ENCODE measurements at regions of chr7 and their contacts with region 1.

Region 1: DNA sequence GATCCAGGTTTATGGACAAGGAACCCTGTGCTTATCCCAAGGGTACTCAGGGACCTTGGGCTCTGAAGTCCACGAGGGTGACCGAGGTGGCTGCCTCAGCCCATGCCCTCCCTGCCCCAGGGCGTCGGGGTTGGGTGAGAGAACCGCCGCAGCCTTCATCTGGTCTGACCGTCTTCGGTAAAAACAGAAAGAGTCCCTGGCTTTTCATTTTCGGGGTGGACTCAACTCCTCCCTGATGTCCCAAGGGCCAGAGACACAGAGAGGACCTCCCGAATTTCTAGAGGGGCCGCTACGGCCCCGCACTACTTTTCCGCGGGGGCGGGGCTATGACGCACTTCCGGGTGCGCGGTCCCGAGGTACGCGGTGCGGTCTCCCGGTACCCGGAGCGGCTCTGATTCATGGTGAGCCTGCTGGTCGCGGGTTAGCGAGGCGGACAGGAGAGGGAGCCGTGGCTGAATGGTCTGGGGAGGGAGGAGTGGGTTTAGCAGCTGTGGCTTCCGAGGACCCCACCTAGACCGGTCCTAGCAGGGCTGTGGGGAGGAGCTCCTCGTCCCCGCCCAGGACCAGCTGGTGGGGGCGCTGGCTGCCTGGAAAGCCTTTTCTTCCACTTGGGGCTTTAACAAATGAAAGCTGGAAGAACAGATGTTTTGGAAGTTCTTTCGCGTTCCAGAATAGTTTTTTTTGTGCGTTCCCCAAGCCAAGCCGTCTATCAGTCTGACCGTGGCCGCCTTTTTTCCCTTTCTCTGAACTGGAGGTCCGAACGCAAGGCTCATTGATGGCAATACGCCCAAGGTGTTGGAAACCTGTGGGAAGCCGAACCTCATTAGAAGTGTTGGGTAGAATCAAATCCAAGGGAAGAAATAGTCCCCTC is at the start of gene ZSCAN21:
- DNase-seq: peak; percentile 79
- H3K4me3 Mint-ChIP-seq: peak within 1 kb of the TSS; percentile 74
- H3K27ac Mint-ChIP-seq: peak within 1 kb of the TSS; percentile 63
- H3K4me1 Mint-ChIP-seq: peaks cover 7% of the 10 kb centered on the region
- H3K27me3 Mint-ChIP-seq: no peaks in the 10 kb centered on the region
- CTCF ChIP-seq: no peak
- total RNA-seq, gene ZSCAN21: 5.5 and 5.7 TPM in 2 replicates

Region 2: DNA sequence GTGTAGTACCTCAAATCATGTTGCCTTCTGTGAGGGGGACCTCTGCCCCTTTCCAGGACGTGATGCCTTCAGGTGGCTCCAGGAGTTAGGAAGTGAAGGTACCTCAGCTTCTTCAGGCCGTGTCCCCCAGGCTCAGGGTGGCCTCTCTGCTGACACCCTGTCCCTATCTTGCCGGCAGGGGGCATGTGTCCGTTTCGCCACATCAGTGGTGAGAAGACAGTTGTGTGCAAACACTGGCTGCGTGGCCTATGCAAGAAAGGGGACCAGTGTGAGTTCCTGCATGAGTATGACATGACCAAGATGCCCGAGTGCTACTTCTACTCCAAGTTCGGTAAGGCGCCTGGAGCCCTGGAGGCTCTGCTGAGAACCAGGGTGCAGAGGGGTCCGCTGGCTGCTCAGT is 601.7 kb before region 1 on chr7:
- CTCF ChIA-PET with region 1: no interaction called
- intact Hi-C with region 1: no loop called
- DNase-seq: peak; percentile 13
- H3K4me3 Mint-ChIP-seq: no peak overlapping the region
- H3K27ac Mint-ChIP-seq: no peak overlapping the region
- H3K4me1 Mint-ChIP-seq: no peaks in the 10 kb centered on the region
- H3K27me3 Mint-ChIP-seq: no peaks in the 10 kb centered on the region
- CTCF ChIP-seq: no peak

Region 3: DNA sequence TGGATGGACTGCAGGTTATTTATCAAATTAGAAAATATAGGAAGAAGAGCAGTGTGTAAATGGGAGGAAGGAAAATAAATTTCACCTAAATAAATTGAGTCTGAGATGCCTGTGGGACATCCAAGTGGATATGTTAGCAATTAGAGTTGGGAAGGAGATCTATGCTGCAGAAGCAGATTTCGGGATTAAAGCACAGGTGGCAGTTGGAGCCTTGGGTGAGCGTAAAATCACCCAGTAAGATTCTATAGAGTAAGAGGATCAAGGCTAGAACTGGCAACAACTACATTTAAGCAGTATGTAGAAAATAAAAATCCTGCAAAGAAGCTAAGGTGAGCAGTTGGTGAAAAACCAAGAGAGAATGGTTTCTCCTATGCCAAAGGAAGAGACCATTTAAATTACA is 138.7 kb before region 1 on chr7:
- CTCF ChIA-PET with region 1: no interaction called
- intact Hi-C with region 1: loop called (anchors 5 kb)
- DNase-seq: no peak
- H3K4me3 Mint-ChIP-seq: no peak overlapping the region
- H3K27ac Mint-ChIP-seq: no peak overlapping the region
- H3K4me1 Mint-ChIP-seq: peaks cover 3% of the 10 kb centered on the region
- H3K27me3 Mint-ChIP-seq: no peaks in the 10 kb centered on the region
- CTCF ChIP-seq: no peak

Region 4: DNA sequence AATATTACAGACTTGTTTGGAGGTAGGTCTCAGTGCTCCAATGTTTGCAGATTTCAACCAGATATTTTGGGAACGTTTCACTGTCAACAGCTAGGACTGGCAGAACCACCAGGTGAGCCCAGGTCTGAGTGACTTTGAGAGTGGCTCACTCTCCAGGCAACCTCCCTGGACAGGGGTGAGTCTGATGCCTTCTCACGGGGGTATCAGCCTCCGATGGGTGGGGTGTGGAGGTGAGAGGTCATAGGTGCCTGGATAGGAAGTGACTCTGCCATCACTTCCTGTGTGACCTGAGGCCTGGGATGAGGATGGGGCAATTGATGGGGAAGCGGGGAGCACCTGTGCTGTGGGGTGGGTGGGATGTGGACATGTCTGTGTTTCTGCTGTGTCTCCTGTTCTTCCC is 78.4 kb before region 1 on chr7:
- CTCF ChIA-PET with region 1: no interaction called
- intact Hi-C with region 1: no loop called
- DNase-seq: no peak
- H3K4me3 Mint-ChIP-seq: no peak overlapping the region
- H3K27ac Mint-ChIP-seq: no peak overlapping the region
- H3K4me1 Mint-ChIP-seq: peaks cover 14% of the 10 kb centered on the region
- H3K27me3 Mint-ChIP-seq: no peaks in the 10 kb centered on the region
- CTCF ChIP-seq: no peak